ENCODE measurements at regions of chr17 and their contacts with region 1.

Region 1: DNA sequence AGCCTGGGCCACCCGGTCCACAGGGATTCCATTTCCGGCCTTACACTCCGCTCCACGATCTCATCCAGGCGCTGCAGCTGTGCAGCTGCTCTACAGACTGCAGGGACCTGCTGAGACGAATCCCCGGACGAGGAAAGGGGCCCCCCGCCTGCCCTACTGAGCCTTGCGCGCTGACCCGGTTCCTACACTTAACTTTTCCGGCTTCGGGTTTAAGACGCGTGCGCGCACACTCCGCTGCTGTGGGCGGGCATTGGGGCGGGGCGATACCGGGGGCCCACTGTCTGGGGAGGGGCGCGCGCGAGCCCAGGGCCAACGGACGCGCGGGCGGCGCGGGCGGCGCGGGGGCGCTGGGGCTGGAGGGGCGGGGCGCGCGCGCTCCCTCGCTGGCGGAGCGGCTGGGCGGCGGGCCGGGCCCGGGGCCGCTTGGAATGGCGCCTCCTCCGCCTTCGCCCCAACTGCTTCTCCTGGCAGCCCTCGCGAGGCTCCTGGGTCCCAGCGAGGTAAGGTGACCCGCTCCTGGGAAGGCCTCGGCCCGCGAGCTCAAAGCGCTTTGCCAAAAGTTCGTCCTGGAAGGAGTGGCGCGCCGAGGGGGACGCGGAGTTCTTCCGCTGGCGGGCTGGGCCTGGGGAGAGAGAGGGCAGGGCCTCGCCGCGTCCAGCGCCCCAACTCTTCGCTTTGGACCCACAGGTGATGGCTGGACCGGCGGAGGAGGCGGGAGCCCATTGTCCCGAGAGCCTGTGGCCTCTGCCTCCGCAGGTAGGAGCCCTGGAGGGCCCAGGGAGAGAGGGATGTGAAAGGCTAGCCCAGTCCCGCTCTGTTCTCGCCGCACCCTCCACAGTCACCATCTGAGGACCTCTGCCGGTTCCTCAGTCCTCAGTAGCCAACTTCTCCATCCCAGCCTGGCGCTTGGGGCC is at the start of gene TP53I13:
- DNase-seq: peak; percentile 69 to 98 (median 92)
- ATAC-seq: peak; percentile 62
- H3K4me3 ChIP-seq: peak within 1 kb of the TSS; percentile 90
- H3K4me3 Mint-ChIP-seq: peak within 1 kb of the TSS; percentile 96
- H3K27ac ChIP-seq: peak within 1 kb of the TSS; percentile 61 to 70
- H3K27ac Mint-ChIP-seq: peak within 1 kb of the TSS; percentile 82
- H3K4me1 ChIP-seq: peaks cover 58% of the 10 kb centered on the region
- H3K4me1 Mint-ChIP-seq: peaks cover 35% of the 10 kb centered on the region
- H3K27me3 ChIP-seq: no peaks in the 10 kb centered on the region
- H3K27me3 Mint-ChIP-seq: no peaks in the 10 kb centered on the region
- CTCF ChIP-seq: no peak
- total RNA-seq, gene TP53I13: 45.8 to 47.7 TPM

Region 2: DNA sequence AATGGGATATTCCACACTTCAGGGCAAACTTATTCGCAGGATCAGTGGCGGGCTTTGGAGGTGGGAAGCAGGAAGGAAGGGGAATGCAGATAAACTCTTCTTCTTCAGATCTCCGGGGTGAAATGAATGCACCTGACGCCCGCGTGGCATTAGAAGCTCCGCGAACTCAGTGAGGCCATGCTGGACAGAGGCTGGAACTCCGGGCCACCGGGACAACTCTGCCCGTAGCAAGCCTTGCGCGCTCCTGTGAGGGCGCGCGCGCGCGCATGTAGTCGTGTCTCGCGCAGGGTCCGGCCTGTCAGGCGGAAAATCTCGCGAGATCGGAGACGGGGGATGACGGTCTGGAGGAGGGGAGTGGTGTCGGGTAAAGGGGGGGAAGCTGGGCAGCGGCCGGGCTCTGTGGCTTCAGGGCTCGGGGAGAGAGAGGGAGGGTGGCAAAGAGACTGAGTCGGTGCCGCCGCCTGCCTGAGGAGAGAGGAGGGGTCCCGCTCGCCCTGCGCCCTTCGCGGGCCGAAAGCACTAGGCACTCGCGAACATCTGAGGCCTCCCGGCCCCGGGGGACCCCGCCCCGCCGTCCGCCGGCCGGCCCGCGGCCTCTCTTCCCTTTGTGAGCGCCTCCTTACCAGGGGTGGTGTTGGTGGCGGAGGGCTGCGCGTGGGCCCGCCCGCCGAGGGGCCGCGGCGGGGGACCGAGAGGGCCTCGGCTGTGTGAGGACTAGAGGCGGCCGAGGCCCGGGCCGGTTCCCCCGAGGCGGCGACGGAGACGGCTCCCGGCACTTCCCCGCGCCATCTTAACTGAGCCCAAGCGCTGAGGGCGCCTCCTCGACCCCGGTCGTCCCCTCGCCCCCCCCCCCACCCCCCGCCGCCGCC is 178.4 kb before region 1 on chr17 and contains the start of gene TAOK1:
- CTCF ChIA-PET with region 1: no interaction called
- POLR2A ChIA-PET with region 1: no interaction called
- intact Hi-C with region 1: loop called in 1 of 2 experiments (anchors 1 kb)
- DNase-seq: peak; percentile 93 to 99 (median 98)
- ATAC-seq: peak; percentile 89
- H3K4me3 ChIP-seq: peak within 1 kb of the TSS; percentile 88
- H3K4me3 Mint-ChIP-seq: peak within 1 kb of the TSS; percentile 99
- H3K27ac ChIP-seq: peak within 1 kb of the TSS; percentile 79 to 93
- H3K27ac Mint-ChIP-seq: peak within 1 kb of the TSS; percentile 97
- H3K4me1 ChIP-seq: peaks cover 20% of the 10 kb centered on the region
- H3K4me1 Mint-ChIP-seq: peaks cover 47% of the 10 kb centered on the region
- H3K27me3 ChIP-seq: no peaks in the 10 kb centered on the region
- H3K27me3 Mint-ChIP-seq: no peaks in the 10 kb centered on the region
- CTCF ChIP-seq: no peak
- total RNA-seq, gene TAOK1: 33.1 to 33.8 TPM

Region 3: DNA sequence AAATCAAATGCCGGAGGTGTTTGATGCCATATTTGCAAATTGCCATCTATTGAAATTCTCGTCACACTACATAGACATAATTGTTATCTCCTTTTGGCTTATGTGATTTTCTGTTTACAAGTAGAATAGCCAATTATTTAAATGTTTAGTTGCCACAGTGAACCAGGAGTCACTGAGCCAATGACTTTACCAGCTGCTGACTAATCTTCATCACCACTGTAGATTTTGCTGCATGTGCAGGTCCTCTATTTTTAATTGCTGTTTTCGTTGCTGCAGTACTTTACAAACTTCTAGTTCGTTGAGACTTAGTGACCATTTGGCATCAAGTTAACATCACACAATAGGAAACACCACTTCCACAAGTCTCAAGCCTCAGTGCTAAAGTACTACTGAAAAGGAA is 24.5 kb before region 1 on chr17:
- CTCF ChIA-PET with region 1: interaction called, 3 read pairs
- POLR2A ChIA-PET with region 1: no interaction called
- intact Hi-C with region 1: loop called in 1 of 2 experiments (anchors 2 kb)
- DNase-seq: no peak
- ATAC-seq: no peak
- H3K4me3 ChIP-seq: no peak overlapping the region
- H3K4me3 Mint-ChIP-seq: no peak overlapping the region
- H3K27ac ChIP-seq: no peak overlapping the region
- H3K27ac Mint-ChIP-seq: no peak overlapping the region
- H3K4me1 ChIP-seq: no peaks in the 10 kb centered on the region
- H3K4me1 Mint-ChIP-seq: no peaks in the 10 kb centered on the region
- H3K27me3 ChIP-seq: no peaks in the 10 kb centered on the region
- H3K27me3 Mint-ChIP-seq: no peaks in the 10 kb centered on the region
- CTCF ChIP-seq: no peak

Region 4: DNA sequence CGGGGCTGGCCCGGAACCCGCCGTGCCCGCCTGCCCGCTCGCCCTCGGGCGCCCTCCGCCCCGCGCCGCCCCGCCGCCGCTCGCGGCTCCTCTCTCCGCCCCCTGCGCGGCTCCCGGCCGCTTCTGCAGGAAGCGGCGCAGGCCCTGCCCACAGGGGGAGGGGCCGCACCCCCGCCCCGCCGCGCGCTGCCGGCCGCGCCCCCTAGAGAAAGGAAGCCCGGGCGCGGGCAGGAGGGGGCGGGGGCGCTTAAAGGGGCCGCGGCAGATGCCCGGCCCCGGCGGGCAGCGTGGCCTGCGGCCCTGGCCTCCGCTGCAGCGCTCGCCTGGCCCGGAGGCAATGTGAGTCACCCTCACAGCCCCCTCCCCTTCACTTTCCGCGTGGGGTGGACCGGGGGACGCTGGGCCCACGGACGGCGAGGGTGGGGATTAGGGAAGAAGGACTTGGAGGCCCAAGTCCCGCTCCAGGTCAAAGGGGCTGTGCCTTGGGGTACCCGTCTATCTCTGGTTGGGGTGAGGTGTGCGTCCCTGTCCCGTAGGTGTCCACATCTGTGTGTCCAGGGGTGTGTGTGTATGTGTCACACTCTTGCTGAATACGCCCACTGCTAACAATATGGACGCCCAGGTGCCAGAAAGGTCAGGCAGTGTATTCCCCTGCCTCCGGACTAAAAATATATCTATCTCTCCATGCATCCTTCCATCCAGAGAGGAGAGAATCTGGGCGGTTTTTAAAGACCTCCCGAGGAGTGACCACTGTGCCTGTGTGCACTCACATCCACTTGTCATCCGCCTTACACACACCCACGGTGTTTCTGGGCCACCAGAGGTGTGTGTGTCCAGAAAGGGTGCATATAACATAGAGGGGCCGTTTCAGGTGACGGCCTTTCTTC is 21.2 kb after region 1 on chr17 and contains the start of gene GIT1:
- CTCF ChIA-PET with region 1: interaction called, 19 read pairs
- POLR2A ChIA-PET with region 1: interaction called, 8 read pairs
- intact Hi-C with region 1: loop called in 1 of 2 experiments (anchors 2 kb)
- DNase-seq: peak; percentile 65 to 94 (median 81)
- ATAC-seq: peak; percentile 83
- H3K4me3 ChIP-seq: peak within 1 kb of the TSS; percentile 84
- H3K4me3 Mint-ChIP-seq: peak within 1 kb of the TSS; percentile 98
- H3K27ac ChIP-seq: peak within 1 kb of the TSS; percentile 60 to 64
- H3K27ac Mint-ChIP-seq: peak within 1 kb of the TSS; percentile 86
- H3K4me1 ChIP-seq: peaks cover 84% of the 10 kb centered on the region
- H3K4me1 Mint-ChIP-seq: peaks cover 71% of the 10 kb centered on the region
- H3K27me3 ChIP-seq: no peaks in the 10 kb centered on the region
- H3K27me3 Mint-ChIP-seq: no peaks in the 10 kb centered on the region
- CTCF ChIP-seq: no peak
- total RNA-seq, gene GIT1: 35.8 to 36.7 TPM

Region 5: DNA sequence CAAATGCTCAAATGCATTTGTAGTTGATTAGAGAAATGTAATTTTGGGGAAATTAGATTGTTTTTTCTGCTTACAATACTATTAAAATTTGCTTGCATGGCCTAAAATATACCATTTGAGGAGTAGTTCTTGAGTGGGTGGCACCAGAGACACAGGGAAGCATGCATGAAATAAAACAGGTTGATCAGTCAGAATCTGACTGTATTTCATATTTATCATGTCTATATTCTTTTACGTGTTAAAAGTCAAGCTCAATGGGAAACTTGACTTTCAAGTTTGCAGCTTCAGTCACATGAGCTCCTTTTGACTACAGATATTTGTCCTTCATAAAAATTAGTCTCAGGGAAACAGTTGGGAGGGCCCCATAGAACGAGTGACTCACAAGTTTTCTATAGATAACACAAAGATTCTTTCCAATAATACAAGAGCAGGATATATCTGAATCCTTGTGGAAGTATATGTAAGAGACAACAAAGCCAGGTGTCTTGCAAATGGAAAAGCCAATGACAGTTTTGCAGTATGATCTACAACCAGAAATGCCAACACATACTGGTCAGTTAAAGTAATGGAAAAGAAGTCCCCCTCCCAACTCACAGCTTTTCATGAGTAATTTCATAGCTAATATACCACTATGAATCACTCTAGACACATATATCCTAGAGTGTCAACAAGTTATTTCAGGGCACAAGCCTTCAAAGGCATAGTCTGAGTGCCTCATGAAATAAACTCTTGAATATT is 96.3 kb after region 1 on chr17:
- CTCF ChIA-PET with region 1: no interaction called
- POLR2A ChIA-PET with region 1: no interaction called
- intact Hi-C with region 1: no loop called
- DNase-seq: peak in 2 of 14 experiments; percentile 10 to 21
- ATAC-seq: no peak
- H3K4me3 ChIP-seq: no peak overlapping the region
- H3K4me3 Mint-ChIP-seq: no peak overlapping the region
- H3K27ac ChIP-seq: no peak overlapping the region
- H3K27ac Mint-ChIP-seq: peak overlapping the region; percentile 62
- H3K4me1 ChIP-seq: no peaks in the 10 kb centered on the region
- H3K4me1 Mint-ChIP-seq: peaks cover 22% of the 10 kb centered on the region
- H3K27me3 ChIP-seq: no peaks in the 10 kb centered on the region
- H3K27me3 Mint-ChIP-seq: no peaks in the 10 kb centered on the region
- CTCF ChIP-seq: no peak